ENCODE measurements at regions of chr11 and their contacts with region 1.

Region 1: DNA sequence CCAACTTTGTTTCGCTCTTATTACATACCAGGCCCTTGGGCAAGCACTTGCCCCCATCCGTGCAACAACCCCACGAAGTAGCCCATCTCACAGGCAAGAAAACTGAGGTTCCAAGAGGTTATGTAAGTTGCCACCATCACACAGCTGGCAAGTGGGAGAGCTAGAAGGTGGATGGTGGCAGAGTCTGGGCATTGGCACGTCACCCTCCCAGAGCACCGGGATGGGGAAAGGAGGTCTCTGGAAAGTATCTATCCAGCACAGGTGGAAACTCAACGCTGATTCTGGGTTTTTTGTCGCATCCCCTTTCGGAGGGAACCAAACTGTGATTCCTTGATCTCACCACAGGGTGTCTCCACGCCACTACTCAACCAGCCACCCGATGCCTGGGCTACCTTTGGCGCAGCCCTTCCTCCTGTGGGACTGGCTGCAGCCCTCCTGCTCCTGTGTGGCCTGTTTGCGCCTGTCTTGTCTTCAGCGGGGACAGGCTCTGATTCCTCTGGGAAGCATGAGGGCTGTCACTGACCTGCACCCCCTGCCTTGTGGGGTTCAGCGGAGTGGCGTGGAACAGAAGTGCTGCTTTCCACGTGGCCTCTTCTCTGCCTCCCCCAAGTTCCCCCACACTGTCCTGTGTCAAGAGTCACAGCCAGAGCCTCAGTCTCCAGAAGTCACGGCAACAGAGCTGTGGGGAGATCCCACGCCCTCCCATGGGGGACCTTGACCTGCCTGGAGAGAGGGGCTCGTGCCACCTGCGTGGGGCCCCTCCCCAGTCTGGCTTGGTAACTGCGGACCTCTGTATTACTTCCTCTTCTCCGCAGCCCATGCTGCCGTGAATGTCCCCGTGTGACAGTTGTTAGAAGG is 34.4 kb upstream of the TRIM29 start:
- DNase-seq: peak in 13 of 14 experiments; percentile 15 to 65 (median 31)
- ATAC-seq: peak; percentile 56
- H3K4me3 ChIP-seq: no peak overlapping the region
- H3K4me3 Mint-ChIP-seq: no peak overlapping the region
- H3K27ac ChIP-seq: no peak overlapping the region
- H3K27ac Mint-ChIP-seq: no peak overlapping the region
- H3K4me1 ChIP-seq: peaks cover 22% of the 10 kb centered on the region
- H3K4me1 Mint-ChIP-seq: peaks cover 10% of the 10 kb centered on the region
- H3K27me3 ChIP-seq: peaks cover 40 to 65% of the 10 kb centered on the region in 2 experiments
- H3K27me3 Mint-ChIP-seq: peaks cover 76% of the 10 kb centered on the region
- CTCF ChIP-seq: peak; percentile 60

Region 2: GRCh38 chr11:120229451-120230424 is 57.5 kb after region 1 on chr11:
- CTCF ChIA-PET with region 1: no interaction called
- POLR2A ChIA-PET with region 1: no interaction called
- intact Hi-C with region 1: loop called in 1 of 2 experiments (anchors 2 kb)
- DNase-seq: peak in 4 of 14 experiments; percentile 10 to 47 (median 30)
- ATAC-seq: no peak
- H3K4me3 ChIP-seq: no peak overlapping the region
- H3K4me3 Mint-ChIP-seq: no peak overlapping the region
- H3K27ac ChIP-seq: no peak overlapping the region
- H3K27ac Mint-ChIP-seq: no peak overlapping the region
- H3K4me1 ChIP-seq: no peaks in the 10 kb centered on the region
- H3K4me1 Mint-ChIP-seq: no peaks in the 10 kb centered on the region
- H3K27me3 ChIP-seq: peaks cover 6 to 7% of the 10 kb centered on the region in 2 experiments
- H3K27me3 Mint-ChIP-seq: peaks cover 27% of the 10 kb centered on the region
- CTCF ChIP-seq: peak; percentile 52

Region 3: GRCh38 chr11:120303004-120303637 is 130.8 kb after region 1 on chr11:
- CTCF ChIA-PET with region 1: no interaction called
- POLR2A ChIA-PET with region 1: no interaction called
- intact Hi-C with region 1: loop called (anchors 1 to 2 kb)
- DNase-seq: peak; percentile 26 to 80 (median 45)
- ATAC-seq: peak; percentile 62
- H3K4me3 ChIP-seq: no peak overlapping the region
- H3K4me3 Mint-ChIP-seq: no peak overlapping the region
- H3K27ac ChIP-seq: no peak overlapping the region
- H3K27ac Mint-ChIP-seq: no peak overlapping the region
- H3K4me1 ChIP-seq: no peaks in the 10 kb centered on the region
- H3K4me1 Mint-ChIP-seq: no peaks in the 10 kb centered on the region
- H3K27me3 ChIP-seq: peaks cover 0 to 3% of the 10 kb centered on the region in 2 experiments
- H3K27me3 Mint-ChIP-seq: peaks cover 45% of the 10 kb centered on the region
- CTCF ChIP-seq: peak; percentile 91

Region 4: GRCh38 chr11:120682866-120683265 is 510.6 kb after region 1 on chr11:
- CTCF ChIA-PET with region 1: no interaction called
- POLR2A ChIA-PET with region 1: no interaction called
- intact Hi-C with region 1: loop called in 1 of 2 experiments (anchors 10 kb)
- DNase-seq: no peak
- ATAC-seq: no peak
- H3K4me3 ChIP-seq: no peak overlapping the region
- H3K4me3 Mint-ChIP-seq: no peak overlapping the region
- H3K27ac ChIP-seq: no peak overlapping the region
- H3K27ac Mint-ChIP-seq: no peak overlapping the region
- H3K4me1 ChIP-seq: no peaks in the 10 kb centered on the region
- H3K4me1 Mint-ChIP-seq: no peaks in the 10 kb centered on the region
- H3K27me3 ChIP-seq: peaks cover 3 to 4% of the 10 kb centered on the region in 2 experiments
- H3K27me3 Mint-ChIP-seq: peaks cover 48% of the 10 kb centered on the region
- CTCF ChIP-seq: no peak

Measured in CD4-positive, alpha-beta T cell (primary cell).